Activated naive CD4-positive, alpha-beta T cell treated with anti-CD3 and anti-CD28 coated beads for 36 hours (primary cell): ENCODE measurements at regions of chr5 and their contacts with region 1.

Region 1: GRCh38 chr5:160390787-160391696 is 8.8 kb downstream of the FAM200C start:
- DNase-seq: no peak
- H3K4me3 Mint-ChIP-seq: no peak overlapping the region
- H3K27ac Mint-ChIP-seq: no peak overlapping the region
- H3K4me1 Mint-ChIP-seq: no peaks in the 10 kb centered on the region
- H3K27me3 Mint-ChIP-seq: no peaks in the 10 kb centered on the region

Region 2: GRCh38 chr5:160199410-160199911 is 191.6 kb before region 1 on chr5:
- CTCF ChIA-PET with region 1: interaction called, 4 read pairs
- intact Hi-C with region 1: loop called (anchors 1 kb)
- DNase-seq: peak; percentile 68
- H3K4me3 Mint-ChIP-seq: peak overlapping the region; percentile 65
- H3K27ac Mint-ChIP-seq: no peak overlapping the region
- H3K4me1 Mint-ChIP-seq: peaks cover 2% of the 10 kb centered on the region
- H3K27me3 Mint-ChIP-seq: peaks cover 9% of the 10 kb centered on the region

Region 3: DNA sequence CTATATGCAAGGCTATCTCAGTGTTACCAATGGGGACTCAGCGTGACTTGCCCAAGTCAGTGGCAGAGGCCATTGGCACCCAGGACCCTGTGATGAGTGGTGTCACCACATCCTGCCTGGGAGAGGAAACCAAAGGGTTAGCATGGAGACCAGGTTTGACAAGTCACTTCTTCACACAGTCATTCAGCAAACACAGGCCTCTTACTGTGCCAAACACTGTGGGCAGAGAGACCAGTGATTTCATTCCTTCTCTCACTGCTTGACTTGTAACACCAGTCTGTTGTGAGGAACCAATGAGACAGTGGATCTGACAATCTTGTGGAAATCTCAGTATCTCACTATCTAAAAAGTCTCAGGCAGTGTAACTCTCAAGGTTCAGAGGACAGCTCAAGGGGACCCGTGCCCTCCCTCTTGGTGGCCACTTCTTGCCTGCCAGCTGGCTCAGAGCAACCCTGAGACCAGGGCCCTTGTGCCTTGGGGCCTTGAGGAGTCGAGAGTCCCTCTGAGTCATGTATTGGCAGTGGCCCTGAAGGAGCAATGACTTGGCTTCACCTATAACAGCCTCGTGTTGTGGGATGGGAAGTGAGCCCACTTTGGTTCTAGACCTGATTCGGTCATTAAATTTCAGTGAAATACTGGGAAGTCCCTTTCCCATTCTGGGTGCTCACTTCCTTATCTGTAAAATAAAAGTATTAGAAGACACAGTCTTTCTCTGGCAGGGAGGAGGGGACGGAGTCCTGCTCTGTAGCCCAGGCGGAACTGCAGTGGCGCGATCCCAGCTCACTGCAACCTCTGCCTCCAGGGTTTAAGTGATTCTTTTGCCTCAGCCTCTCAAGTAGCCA is 160.1 kb before region 1 on chr5:
- CTCF ChIA-PET with region 1: no interaction called
- intact Hi-C with region 1: no loop called
- DNase-seq: peak; percentile 17
- H3K4me3 Mint-ChIP-seq: no peak overlapping the region
- H3K27ac Mint-ChIP-seq: no peak overlapping the region
- H3K4me1 Mint-ChIP-seq: no peaks in the 10 kb centered on the region
- H3K27me3 Mint-ChIP-seq: no peaks in the 10 kb centered on the region

Region 4: GRCh38 chr5:160357861-160358411 is 33.1 kb before region 1 on chr5:
- CTCF ChIA-PET with region 1: no interaction called
- intact Hi-C with region 1: no loop called
- DNase-seq: no peak
- H3K4me3 Mint-ChIP-seq: no peak overlapping the region
- H3K27ac Mint-ChIP-seq: no peak overlapping the region
- H3K4me1 Mint-ChIP-seq: no peaks in the 10 kb centered on the region
- H3K27me3 Mint-ChIP-seq: no peaks in the 10 kb centered on the region

Region 5: GRCh38 chr5:160926428-160926827 is 535.4 kb after region 1 on chr5:
- CTCF ChIA-PET with region 1: no interaction called
- intact Hi-C with region 1: no loop called
- DNase-seq: no peak
- H3K4me3 Mint-ChIP-seq: no peak overlapping the region
- H3K27ac Mint-ChIP-seq: no peak overlapping the region
- H3K4me1 Mint-ChIP-seq: no peaks in the 10 kb centered on the region
- H3K27me3 Mint-ChIP-seq: no peaks in the 10 kb centered on the region

Region 6: GRCh38 chr5:162334944-162335343 is 1943.9 kb after region 1 on chr5:
- CTCF ChIA-PET with region 1: no interaction called
- intact Hi-C with region 1: no loop called
- DNase-seq: no peak
- H3K4me3 Mint-ChIP-seq: no peak overlapping the region
- H3K27ac Mint-ChIP-seq: no peak overlapping the region
- H3K4me1 Mint-ChIP-seq: no peaks in the 10 kb centered on the region
- H3K27me3 Mint-ChIP-seq: no peaks in the 10 kb centered on the region